MCF 10A (cell line): ENCODE measurements at regions of chr6 and their contacts with region 1.

Region 1: DNA sequence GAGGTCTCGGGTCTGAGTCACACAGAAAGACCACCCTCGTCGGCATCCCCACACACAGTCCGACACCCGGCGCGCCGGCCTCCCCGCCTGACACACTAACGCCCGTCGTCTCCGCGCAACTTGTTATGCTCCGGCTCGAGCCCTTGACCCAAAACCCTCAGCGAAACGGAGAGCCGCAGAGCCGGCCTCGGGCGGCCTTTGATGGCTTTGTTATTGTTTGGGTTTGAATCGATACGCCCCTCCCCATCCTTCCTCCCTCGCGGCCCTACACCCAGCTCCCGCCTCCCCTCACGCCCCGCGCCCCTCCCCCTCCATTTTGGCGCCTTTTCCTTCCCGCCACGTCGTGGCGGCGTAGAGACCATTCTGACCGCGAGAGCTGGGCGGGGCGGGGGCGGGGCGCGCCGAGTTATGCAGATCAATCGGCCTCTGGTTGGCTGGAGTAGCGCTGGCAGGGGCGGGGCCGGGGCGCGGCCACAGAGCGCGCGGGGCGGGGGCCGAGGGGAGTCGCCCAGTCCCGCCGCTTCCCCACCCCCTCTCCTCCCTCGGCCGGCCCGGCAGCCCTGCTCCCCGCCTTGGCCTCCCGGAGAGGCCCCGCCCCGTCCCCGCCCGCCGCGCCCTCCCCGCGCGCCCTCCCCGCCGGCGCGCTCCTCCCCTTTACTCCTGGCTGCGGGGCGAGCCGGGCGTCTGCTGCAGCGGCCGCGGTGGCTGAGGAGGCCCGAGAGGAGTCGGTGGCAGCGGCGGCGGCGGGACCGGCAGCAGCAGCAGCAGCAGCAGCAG is at the start of gene PIM1:
- DNase-seq: peak; percentile 96
- H3K4me3 Mint-ChIP-seq: peak within 1 kb of the TSS; percentile 81
- H3K27ac Mint-ChIP-seq: peak within 1 kb of the TSS; percentile 93
- H3K4me1 Mint-ChIP-seq: peaks cover 10% of the 10 kb centered on the region
- H3K27me3 Mint-ChIP-seq: no peaks in the 10 kb centered on the region
- CTCF ChIP-seq: no peak
- total RNA-seq, gene PIM1: 6.0 and 6.2 TPM in 2 replicates

Region 2: GRCh38 chr6:36765594-36766398 is 403.9 kb before region 1 on chr6:
- CTCF ChIA-PET with region 1: no interaction called
- POLR2A ChIA-PET with region 1: no interaction called
- intact Hi-C with region 1: loop called (anchors 1 kb)
- DNase-seq: peak; percentile 83
- H3K4me3 Mint-ChIP-seq: no peak overlapping the region
- H3K27ac Mint-ChIP-seq: no peak overlapping the region
- H3K4me1 Mint-ChIP-seq: peaks cover 17% of the 10 kb centered on the region
- H3K27me3 Mint-ChIP-seq: no peaks in the 10 kb centered on the region
- CTCF ChIP-seq: peak; percentile 84

Region 3: DNA sequence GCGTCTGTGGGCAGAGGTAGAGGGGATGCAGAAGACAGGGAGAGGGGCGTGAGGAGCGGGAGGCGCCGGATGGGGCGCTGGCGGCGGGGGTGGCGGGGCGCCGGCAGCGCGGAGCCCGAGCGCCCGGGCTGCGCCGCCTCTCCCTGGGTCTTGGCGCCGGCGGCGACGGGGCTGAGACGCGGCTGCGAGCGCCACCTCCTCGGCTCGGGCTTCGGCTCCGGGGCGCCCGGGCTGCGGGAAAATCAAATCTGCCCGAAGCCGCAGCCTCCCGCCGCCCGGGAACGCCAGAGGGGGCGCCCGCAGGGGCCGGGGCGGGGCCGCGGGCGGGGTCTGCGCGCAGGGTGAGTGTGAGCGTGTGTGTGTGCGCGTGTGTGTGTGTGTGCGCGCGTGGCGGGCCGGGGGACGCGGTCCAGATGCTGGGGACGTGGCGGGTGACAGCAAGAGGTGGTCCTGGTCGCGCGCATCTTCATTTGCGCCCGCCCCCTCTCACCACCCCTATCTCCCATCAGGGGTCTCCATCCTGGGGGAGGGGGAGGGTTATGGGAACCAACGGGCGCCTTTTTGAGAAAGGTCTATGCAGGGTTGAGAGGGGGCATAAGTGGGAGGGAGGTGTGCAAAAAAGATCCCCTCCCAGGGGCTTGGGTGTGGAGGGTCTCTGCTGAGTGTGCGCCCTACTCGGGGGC is 329.8 kb before region 1 on chr6:
- CTCF ChIA-PET with region 1: no interaction called
- POLR2A ChIA-PET with region 1: no interaction called
- intact Hi-C with region 1: no loop called
- DNase-seq: no peak
- H3K4me3 Mint-ChIP-seq: peak overlapping the region; percentile 51
- H3K27ac Mint-ChIP-seq: no peak overlapping the region
- H3K4me1 Mint-ChIP-seq: no peaks in the 10 kb centered on the region
- H3K27me3 Mint-ChIP-seq: peaks cover 15% of the 10 kb centered on the region
- CTCF ChIP-seq: no peak

Region 4: DNA sequence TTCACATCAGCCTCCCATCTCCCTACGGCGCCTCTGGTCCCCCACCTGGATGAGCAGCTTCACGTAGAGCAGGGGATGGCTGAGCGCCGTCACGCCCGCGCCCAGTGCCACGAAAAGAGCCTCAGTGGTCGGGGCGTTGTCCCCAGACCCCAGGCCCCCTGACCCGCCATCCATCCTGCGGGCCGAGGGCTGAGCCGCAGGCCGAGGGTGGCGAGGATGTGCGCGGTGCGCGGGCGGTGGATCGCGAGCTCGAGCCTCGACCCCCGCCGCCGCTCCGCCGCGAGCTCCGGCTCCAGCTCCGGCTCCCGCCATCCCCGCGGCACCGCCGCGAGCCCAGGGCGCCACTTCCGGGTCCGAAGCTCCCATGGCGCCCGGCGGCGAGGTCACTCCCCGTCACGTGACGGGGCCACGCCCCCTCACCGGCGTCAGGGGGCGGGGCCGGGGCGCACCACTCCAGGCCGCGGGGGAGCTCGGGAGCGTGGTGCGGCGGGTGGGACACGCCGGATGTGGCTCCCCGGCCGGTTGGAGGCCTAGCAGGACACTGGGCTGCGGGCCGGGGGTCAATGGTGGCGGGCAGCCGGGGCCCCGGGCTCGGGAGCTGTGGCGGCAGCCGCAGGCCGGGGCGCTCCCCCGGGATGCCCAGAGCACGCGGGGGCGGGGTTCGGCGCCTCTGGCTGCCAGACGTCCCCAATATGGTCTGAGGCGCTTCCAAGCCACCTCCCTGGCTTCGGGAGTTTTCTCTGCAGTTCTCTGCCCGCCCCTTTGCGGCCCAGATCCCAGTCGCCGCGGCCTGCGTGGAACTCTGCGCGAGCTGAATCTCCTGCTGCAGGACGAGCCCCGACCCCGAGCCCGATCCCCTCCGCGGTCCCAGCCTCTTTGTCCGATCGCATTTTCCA is 183.6 kb before region 1 on chr6 and contains the start of gene MTCH1:
- CTCF ChIA-PET with region 1: no interaction called
- POLR2A ChIA-PET with region 1: interaction called, 16 read pairs
- intact Hi-C with region 1: no loop called
- DNase-seq: peak; percentile 86
- H3K4me3 Mint-ChIP-seq: no peak within 1 kb of the TSS
- H3K27ac Mint-ChIP-seq: no peak within 1 kb of the TSS
- H3K4me1 Mint-ChIP-seq: peaks cover 14% of the 10 kb centered on the region
- H3K27me3 Mint-ChIP-seq: no peaks in the 10 kb centered on the region
- CTCF ChIP-seq: no peak
- total RNA-seq, gene MTCH1: 74.9 and 78.2 TPM in 2 replicates

Region 5: GRCh38 chr6:37051138-37052026 is 118.3 kb before region 1 on chr6:
- CTCF ChIA-PET with region 1: interaction called, 249 read pairs
- POLR2A ChIA-PET with region 1: interaction called, 111 read pairs
- intact Hi-C with region 1: loop called (anchors 1 kb)
- DNase-seq: peak; percentile 75
- H3K4me3 Mint-ChIP-seq: no peak overlapping the region
- H3K27ac Mint-ChIP-seq: no peak overlapping the region
- H3K4me1 Mint-ChIP-seq: peaks cover 17% of the 10 kb centered on the region
- H3K27me3 Mint-ChIP-seq: no peaks in the 10 kb centered on the region
- CTCF ChIP-seq: peak; percentile 86

Region 6: GRCh38 chr6:37083243-37084138 is 86.2 kb before region 1 on chr6:
- CTCF ChIA-PET with region 1: interaction called, 12 read pairs
- POLR2A ChIA-PET with region 1: interaction called, 11 read pairs
- intact Hi-C with region 1: no loop called
- DNase-seq: peak; percentile 84
- H3K4me3 Mint-ChIP-seq: no peak overlapping the region
- H3K27ac Mint-ChIP-seq: no peak overlapping the region
- H3K4me1 Mint-ChIP-seq: peaks cover 16% of the 10 kb centered on the region
- H3K27me3 Mint-ChIP-seq: no peaks in the 10 kb centered on the region
- CTCF ChIP-seq: no peak

Region 7: GRCh38 chr6:37131104-37131959 is 38.4 kb before region 1 on chr6:
- CTCF ChIA-PET with region 1: interaction called, 23 read pairs
- POLR2A ChIA-PET with region 1: interaction called, 24 read pairs
- intact Hi-C with region 1: loop called (anchors 1 kb)
- DNase-seq: peak; percentile 68
- H3K4me3 Mint-ChIP-seq: no peak overlapping the region
- H3K27ac Mint-ChIP-seq: peak overlapping the region; percentile 33
- H3K4me1 Mint-ChIP-seq: peaks cover 49% of the 10 kb centered on the region
- H3K27me3 Mint-ChIP-seq: no peaks in the 10 kb centered on the region
- CTCF ChIP-seq: no peak

Region 8: DNA sequence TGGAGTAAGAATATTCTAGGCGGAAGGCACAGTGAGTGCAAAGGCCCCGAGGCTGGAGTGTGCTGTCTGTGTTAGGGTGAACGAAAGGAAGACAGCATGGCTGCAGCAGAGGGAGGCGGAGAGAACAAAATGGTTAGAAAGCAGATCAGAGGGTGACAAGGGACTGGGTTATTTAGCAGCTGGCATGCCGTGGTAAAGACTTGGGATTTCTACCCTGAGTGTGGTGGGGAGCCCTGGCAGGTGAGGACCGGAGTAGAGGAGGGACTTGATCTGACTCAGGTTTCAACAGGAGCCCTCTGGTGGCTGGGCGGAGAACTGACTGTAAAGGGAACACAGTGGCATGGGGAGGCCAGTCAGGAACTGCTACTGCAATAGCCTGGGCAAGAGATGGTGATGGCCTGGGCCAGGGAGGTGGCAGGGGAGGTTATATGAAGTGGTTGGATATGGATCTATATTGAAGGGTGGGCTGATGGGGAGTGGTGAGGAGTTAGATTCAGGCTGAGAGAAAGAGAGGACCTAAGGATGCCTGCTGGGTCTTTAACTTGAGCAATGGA is 38.3 kb after region 1 on chr6:
- CTCF ChIA-PET with region 1: interaction called, 57 read pairs
- POLR2A ChIA-PET with region 1: interaction called, 6 read pairs
- intact Hi-C with region 1: loop called (anchors 1 kb)
- DNase-seq: peak; percentile 87
- H3K4me3 Mint-ChIP-seq: no peak overlapping the region
- H3K27ac Mint-ChIP-seq: no peak overlapping the region
- H3K4me1 Mint-ChIP-seq: peaks cover 7% of the 10 kb centered on the region
- H3K27me3 Mint-ChIP-seq: no peaks in the 10 kb centered on the region
- CTCF ChIP-seq: peak; percentile 60

Region 9: DNA sequence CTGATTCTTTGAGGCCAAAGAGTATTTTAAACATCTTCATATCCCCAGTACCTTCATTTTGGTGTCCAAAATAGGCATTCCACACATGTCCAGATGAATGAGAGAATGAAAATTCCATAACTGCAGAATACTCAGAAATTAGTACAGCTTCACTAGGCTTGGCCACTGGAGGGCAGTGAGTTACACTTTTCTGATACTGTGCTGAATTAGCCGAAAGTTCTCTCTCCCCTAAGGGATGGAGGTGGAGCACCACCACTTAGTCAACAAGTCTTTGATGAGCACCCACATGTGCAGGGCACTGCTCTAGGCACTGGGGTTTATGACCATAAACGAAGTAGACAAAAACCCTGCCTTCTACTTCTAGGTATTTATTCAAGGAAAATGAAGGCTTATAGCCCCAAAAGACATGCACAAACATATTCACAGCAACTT is 134.3 kb after region 1 on chr6:
- CTCF ChIA-PET with region 1: no interaction called
- POLR2A ChIA-PET with region 1: no interaction called
- intact Hi-C with region 1: no loop called
- DNase-seq: peak; percentile 52
- H3K4me3 Mint-ChIP-seq: no peak overlapping the region
- H3K27ac Mint-ChIP-seq: peak overlapping the region; percentile 57
- H3K4me1 Mint-ChIP-seq: no peaks in the 10 kb centered on the region
- H3K27me3 Mint-ChIP-seq: no peaks in the 10 kb centered on the region
- CTCF ChIP-seq: peak; percentile 30